Esophagus muscularis mucosa (tissue), 4 donors: ENCODE measurements at regions of chr17 and their contacts with region 1.

Region 1: DNA sequence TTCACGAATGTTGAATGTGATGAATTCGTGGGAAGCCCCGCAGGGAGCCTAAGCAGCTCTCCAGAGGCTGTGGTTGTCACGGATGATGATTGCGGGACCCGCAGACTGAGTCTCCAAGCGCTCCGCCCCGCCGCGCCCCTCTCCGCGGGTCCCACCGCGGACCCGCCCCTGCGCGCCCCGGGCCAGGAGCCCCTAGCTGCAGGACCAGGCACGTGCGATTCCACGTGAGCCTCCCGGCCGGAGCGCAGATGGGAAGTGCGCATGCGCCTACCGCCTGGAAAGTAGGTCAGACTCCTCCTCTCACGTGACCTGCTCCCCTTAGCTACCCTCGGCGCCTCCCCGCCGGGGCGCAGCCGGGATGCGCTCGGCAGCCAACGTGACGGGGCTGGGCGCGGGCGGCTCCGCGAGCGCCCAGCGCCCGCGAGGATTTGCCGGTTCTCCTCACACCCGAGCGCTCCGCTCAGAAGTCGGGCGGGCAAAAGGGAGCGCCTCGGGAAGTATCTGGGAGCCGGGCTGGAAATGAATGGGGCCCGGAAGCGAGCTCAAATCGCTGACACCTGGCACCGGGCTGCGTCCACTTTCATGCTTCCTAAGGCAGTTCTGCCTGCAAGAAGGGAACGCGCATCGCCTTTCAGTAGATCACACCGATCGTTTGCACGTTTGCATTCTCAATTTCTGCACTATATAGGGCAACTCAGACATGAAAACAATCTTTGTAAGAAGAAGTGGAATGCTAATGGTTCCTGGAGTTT is 26.4 kb upstream of the HLF start:
- DNase-seq: peak; percentile 98
- H3K4me3 ChIP-seq: peak overlapping the region; percentile 57 to 71 (median 60)
- H3K27ac ChIP-seq: peak overlapping the region; percentile 80 to 92 (median 82)
- H3K4me1 ChIP-seq: peaks cover 14 to 21% (median 20%) of the 10 kb centered on the region in 4 donors
- H3K27me3 ChIP-seq: no peaks in the 10 kb centered on the region
- CTCF ChIP-seq: peak in 1 of 3 experiments; percentile 16
- EP300 ChIP-seq: no peak
- POLR2A ChIP-seq: no peak

Region 2: DNA sequence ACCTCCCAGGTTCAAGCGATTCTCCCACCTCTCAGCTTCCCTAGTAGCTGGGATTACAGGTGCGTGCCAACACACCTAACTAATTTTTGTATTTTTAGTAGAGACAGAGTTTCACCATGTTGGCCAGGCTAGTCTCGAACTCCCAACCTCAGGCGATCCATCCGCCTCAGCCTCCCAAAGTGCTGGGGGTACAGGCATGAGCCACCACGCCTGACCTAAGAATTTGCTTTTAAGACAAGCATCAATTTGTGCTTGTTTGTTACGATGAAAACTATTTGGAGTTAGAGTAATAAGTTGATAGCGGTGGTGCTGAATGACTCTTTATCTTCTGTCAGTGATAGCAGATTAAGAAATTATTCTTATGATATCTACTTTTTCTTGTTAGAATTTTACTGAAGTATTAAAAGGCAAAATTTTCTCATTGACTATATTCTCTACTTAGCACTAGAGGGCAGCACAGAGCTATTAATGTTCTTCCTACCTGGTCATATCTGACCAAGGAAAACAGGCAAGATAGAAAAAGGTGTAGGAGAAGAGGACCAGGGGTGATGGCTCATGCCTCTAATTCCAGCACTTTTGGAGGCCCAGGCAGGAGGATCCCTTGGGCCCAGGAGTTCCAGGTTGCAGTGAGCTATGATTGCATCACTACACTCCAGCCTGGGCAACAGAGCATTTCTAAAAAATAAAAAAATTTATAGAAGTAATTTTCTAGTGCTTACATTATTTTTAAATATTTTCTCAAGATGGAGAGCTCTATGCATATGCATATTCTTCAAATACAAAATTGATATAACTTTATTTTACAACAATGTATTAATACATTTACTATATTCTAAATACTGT is 245.3 kb before region 1 on chr17:
- intact Hi-C with region 1: loop called (anchors 10 kb)
- DNase-seq: no peak
- H3K4me3 ChIP-seq: no peak overlapping the region
- H3K27ac ChIP-seq: no peak overlapping the region
- H3K4me1 ChIP-seq: peaks cover 0 to 5% (median 2%) of the 10 kb centered on the region in 4 donors
- H3K27me3 ChIP-seq: no peaks in the 10 kb centered on the region
- CTCF ChIP-seq: peak; percentile 55 to 64 (median 56)
- EP300 ChIP-seq: no peak
- POLR2A ChIP-seq: no peak

Region 3: DNA sequence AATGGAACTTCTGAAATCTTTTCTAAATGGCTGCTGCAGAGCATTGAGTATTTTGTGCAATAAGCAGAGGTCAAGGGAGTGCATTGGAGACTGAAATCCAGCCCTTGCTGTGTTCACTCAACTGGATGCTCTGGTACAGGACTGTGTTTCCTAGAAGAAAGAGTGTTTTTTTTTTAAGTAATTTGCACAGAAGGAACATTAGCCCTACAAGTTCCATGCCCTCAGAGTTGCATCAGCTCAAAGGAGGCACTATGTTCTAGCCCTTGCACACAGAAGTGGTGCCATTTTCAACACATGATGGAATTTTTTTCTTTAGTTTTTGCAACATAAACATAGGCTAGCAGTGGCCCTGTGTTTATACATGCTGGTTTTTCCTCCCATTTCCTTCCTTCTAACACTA is 117.7 kb before region 1 on chr17:
- intact Hi-C with region 1: no loop called
- DNase-seq: no peak
- H3K4me3 ChIP-seq: no peak overlapping the region
- H3K27ac ChIP-seq: no peak overlapping the region
- H3K4me1 ChIP-seq: peaks cover 3 to 13% (median 10%) of the 10 kb centered on the region in 4 donors
- H3K27me3 ChIP-seq: no peaks in the 10 kb centered on the region
- CTCF ChIP-seq: no peak
- EP300 ChIP-seq: no peak
- POLR2A ChIP-seq: no peak

Region 4: DNA sequence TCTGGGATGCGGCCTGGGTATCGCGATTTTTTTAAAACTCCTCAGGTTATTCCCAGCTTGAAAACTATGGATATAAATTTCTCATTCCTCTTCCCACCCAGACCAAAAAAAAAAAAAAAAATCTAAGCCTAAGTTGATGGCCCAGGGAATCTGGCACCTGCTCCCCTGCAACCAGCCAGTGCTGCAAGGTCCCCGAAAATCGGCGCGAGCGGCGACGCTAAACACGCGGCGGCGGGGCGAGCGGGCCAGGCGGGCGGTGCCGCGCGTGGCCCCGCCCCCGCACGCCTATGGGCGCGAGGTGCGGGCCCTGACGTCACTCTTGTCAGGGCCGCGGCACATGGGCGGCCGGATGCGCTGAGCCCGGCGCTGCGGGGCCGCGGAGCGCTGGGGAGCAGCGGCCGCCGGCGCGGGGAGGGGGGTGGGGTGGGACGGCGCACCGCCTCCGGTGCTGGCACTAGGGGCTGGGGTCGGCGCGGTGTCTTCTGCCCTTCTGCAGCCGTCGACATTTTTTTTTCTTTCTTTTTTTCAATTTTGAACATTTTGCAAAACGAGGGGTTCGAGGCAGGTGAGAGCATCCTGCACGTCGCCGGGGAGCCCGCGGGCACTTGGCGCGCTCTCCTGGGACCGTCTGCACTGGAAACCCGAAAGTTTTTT is 26.4 kb after region 1 on chr17 and contains the start of gene HLF:
- intact Hi-C with region 1: loop called (anchors 2 kb)
- DNase-seq: peak; percentile 93
- H3K4me3 ChIP-seq: peak within 1 kb of the TSS; percentile 70 to 87 (median 76)
- H3K27ac ChIP-seq: peak within 1 kb of the TSS; percentile 92 to 99 (median 98)
- H3K4me1 ChIP-seq: peaks cover 13 to 38% (median 33%) of the 10 kb centered on the region in 4 donors
- H3K27me3 ChIP-seq: no peaks in the 10 kb centered on the region
- CTCF ChIP-seq: peak in 1 of 3 experiments; percentile 4
- EP300 ChIP-seq: no peak
- POLR2A ChIP-seq: no peak
- total RNA-seq, gene HLF: 137 to 176 (median 154) TPM

Region 5: DNA sequence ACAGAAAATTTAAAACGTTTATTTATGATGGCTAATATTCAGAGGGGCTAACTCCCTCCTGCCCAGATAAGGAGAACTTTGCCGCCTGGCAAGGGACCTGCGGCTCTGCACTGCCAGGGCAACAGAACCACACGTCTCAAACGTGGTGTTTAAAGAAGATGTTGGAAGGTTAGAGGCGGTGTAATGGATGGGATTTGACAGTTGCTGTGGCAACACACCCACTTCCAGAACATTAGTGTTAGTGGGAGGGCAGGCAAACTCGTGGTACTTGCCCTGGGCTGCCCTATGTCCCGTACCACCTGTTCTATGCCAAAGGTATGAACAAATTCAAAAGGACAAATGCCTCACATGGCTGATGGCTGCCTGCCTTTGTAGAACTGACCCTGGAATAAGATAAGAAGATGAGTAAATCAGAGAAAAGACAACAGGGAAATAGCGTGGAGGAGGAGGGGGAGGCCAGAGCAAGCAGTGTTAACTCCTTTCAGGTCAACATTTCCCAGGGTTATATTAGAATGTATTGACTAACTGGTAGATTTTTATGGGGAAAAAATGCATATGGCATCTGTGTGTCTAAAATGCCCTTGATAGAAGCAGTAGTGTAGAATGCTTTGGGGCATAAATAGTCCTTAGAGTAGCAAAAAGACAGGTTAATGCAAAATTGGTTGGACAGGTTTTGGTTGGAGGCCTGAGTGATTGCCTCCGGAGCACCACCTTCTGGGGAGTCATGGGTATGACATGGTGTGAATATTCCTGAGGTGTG is 57.2 kb after region 1 on chr17:
- intact Hi-C with region 1: loop called (anchors 2 kb)
- DNase-seq: no peak
- H3K4me3 ChIP-seq: peak overlapping the region in 1 of 4 donors; percentile 16
- H3K27ac ChIP-seq: peak overlapping the region; percentile 77 to 99 (median 95)
- H3K4me1 ChIP-seq: peaks cover 22 to 65% (median 45%) of the 10 kb centered on the region in 4 donors
- H3K27me3 ChIP-seq: no peaks in the 10 kb centered on the region
- CTCF ChIP-seq: peak; percentile 87 to 95 (median 87)
- EP300 ChIP-seq: peak; percentile 88
- POLR2A ChIP-seq: no peak